ENCODE measurements at regions of chr5 and their contacts with region 1.

Region 1: GRCh38 chr5:65624571-65625555 is at the starts of genes SHLD3 and TRAPPC13:
- DNase-seq: peak; percentile 88
- ATAC-seq: peak; percentile 78
- H3K4me3 Mint-ChIP-seq: peak within 1 kb of the TSS; percentile 85
- H3K27ac Mint-ChIP-seq: peak within 1 kb of the TSS; percentile 96
- H3K4me1 Mint-ChIP-seq: peaks cover 44% of the 10 kb centered on the region
- H3K27me3 Mint-ChIP-seq: no peaks in the 10 kb centered on the region
- total RNA-seq, gene SHLD3: 3.5 to 4.0 TPM
- total RNA-seq, gene TRAPPC13: 11.2 to 20.7 TPM

Region 2: DNA sequence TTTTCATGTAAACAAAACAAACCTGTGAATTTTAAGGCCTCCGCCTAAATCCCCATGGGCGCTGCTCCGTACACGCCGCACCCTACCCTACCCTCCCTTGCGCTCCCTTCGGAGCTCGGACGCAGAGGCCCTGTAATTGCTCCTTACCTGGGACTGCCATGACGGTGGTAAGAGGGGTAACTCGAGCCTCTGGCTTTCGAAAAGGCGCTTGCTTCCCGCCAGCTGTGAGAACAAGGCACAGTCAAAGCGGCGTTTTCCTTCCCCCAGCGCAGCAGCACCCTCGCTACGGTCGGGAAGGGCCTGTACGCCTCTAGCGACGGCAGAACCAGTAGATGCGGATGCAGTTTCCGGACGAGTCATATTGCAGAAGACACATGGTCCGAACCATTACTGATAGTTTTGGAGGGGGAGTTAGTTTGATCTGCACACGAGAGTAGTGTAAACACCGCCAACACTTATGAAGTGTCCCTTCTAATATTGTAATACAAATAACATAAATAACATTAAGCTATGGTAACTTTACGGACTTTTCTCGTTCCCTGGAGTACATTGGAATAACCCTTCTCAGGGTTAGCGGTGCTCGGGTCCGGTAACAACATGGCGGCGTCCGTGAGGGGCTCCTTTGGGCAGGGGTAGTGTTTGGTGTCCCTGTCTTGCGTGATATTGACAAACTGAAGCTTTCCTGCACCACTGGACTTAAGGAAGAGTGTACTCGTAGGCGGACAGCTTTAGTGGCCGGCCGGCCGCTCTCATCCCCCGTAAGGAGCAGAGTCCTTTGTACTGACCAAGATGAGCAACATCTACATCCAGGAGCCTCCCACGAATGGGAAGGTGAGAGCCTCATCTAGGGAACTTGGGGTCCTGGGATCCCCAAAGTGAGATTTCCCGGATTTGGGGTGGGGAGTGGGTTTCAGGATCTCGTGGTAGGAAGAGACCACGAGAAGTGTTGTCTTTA is 856.2 kb before region 1 on chr5 and contains the starts of genes CWC27 and SREK1IP1:
- CTCF ChIA-PET with region 1: no interaction called
- POLR2A ChIA-PET with region 1: no interaction called
- intact Hi-C with region 1: loop called in 1 of 2 experiments (anchors 2 kb)
- DNase-seq: peak; percentile 89
- ATAC-seq: peak; percentile 97
- H3K4me3 Mint-ChIP-seq: peak within 1 kb of the TSS; percentile 91
- H3K27ac Mint-ChIP-seq: peak within 1 kb of the TSS; percentile 95
- H3K4me1 Mint-ChIP-seq: peaks cover 45% of the 10 kb centered on the region
- H3K27me3 Mint-ChIP-seq: no peaks in the 10 kb centered on the region
- total RNA-seq, gene CWC27: 35.4 to 35.8 TPM
- total RNA-seq, gene SREK1IP1: 27.8 TPM

Region 3: GRCh38 chr5:64811050-64811640 is 813.7 kb before region 1 on chr5:
- CTCF ChIA-PET with region 1: interaction called, 3 read pairs
- POLR2A ChIA-PET with region 1: no interaction called
- intact Hi-C with region 1: loop called in 1 of 2 experiments (anchors 5 kb)
- DNase-seq: peak; percentile 7
- ATAC-seq: no peak
- H3K4me3 Mint-ChIP-seq: no peak overlapping the region
- H3K27ac Mint-ChIP-seq: no peak overlapping the region
- H3K4me1 Mint-ChIP-seq: peaks cover 6% of the 10 kb centered on the region
- H3K27me3 Mint-ChIP-seq: no peaks in the 10 kb centered on the region

Region 4: GRCh38 chr5:65102828-65103711 is 521.8 kb before region 1 on chr5:
- CTCF ChIA-PET with region 1: no interaction called
- POLR2A ChIA-PET with region 1: no interaction called
- intact Hi-C with region 1: loop called in 1 of 2 experiments (anchors 10 kb)
- DNase-seq: peak; percentile 52
- ATAC-seq: peak; percentile 84
- H3K4me3 Mint-ChIP-seq: peak overlapping the region; percentile 66
- H3K27ac Mint-ChIP-seq: peak overlapping the region; percentile 72
- H3K4me1 Mint-ChIP-seq: peaks cover 30% of the 10 kb centered on the region
- H3K27me3 Mint-ChIP-seq: peaks cover 9% of the 10 kb centered on the region

Region 5: GRCh38 chr5:65525726-65526125 is 99.1 kb before region 1 on chr5:
- CTCF ChIA-PET with region 1: no interaction called
- POLR2A ChIA-PET with region 1: no interaction called
- intact Hi-C with region 1: no loop called
- DNase-seq: no peak
- ATAC-seq: no peak
- H3K4me3 Mint-ChIP-seq: no peak overlapping the region
- H3K27ac Mint-ChIP-seq: no peak overlapping the region
- H3K4me1 Mint-ChIP-seq: no peaks in the 10 kb centered on the region
- H3K27me3 Mint-ChIP-seq: no peaks in the 10 kb centered on the region

Region 6: DNA sequence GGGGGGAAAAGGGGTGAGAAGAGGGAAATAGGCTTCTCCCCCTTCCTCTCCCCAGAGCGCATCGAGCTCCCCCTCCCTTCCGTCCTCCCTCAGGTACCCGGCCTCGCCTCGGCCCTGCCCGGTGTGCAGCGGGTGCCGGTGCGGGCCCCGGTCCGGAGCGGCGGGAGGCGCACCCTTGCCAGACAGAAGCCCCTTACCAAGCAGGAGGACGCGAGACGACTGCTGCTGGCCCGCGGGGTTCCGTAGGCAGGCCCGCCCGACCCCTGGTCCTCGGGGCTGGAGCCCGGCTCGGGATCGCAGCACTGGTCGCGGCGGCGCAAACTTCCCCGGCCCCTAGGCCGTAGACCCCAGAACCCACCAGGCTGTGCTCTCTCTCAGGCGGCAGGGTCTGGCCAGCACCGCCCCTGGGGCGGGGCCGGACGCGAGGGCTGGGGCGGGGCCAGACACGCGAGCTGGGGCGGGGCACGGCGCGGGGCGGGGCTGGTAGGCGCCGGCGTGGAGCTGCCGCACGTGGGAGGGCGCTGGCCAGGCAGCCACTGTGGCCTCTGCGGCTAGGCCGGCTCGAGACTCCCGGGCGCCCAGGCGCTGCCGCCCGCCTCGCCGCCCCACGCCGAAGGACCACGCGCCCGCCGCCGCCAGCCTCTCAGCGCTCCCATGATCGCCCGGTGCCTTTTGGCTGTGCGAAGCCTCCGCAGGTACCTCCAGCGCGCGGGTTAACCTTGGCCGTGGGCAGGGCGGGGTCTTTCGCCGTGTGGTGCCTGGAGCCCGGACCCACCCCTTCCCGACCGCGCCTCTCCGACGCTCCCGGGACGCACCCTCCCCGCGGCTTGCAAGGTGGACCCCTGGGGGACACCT is 97.1 kb after region 1 on chr5 and contains the starts of genes NLN and SGTB:
- CTCF ChIA-PET with region 1: interaction called, 3 read pairs
- POLR2A ChIA-PET with region 1: no interaction called
- intact Hi-C with region 1: loop called in 1 of 2 experiments (anchors 1 kb)
- DNase-seq: peak; percentile 91
- ATAC-seq: peak; percentile 91
- H3K4me3 Mint-ChIP-seq: peak within 1 kb of the TSS; percentile 94
- H3K27ac Mint-ChIP-seq: peak within 1 kb of the TSS; percentile 93
- H3K4me1 Mint-ChIP-seq: peaks cover 20% of the 10 kb centered on the region
- H3K27me3 Mint-ChIP-seq: no peaks in the 10 kb centered on the region
- total RNA-seq, gene NLN: 30.9 to 33.8 TPM
- total RNA-seq, gene SGTB: 18.0 TPM